GM10248 (cell line): ENCODE measurements at regions of chr4 and their contacts with region 1.

Region 1: GRCh38 chr4:105473324-105474098 is at the start of gene PPA2:
- DNase-seq: peak; percentile 92
- CTCF ChIP-seq: no peak

Region 2: GRCh38 chr4:105453550-105454205 is 19.8 kb before region 1 on chr4:
- CTCF ChIA-PET with region 1: interaction called, 24 read pairs
- POLR2A ChIA-PET with region 1: interaction called, 4 read pairs
- DNase-seq: peak; percentile 49
- CTCF ChIP-seq: no peak

Region 3: DNA sequence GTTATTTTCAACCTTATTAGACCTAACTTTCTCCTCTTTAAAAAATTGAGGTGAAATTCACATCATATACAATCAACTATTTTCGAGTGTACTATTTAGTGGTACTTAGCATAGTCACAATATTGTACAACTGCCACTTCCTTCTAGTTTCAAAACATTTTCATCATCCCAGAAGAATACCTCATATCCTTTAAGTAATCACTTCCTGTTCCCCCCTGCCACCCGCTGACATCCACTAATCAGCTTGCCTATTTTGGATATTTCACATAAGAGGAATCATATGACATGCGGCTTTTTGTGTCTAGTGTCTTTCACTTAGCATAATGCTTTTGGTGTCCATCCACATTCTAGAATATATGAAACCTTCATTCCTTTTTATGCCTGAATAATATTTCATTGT is 10.3 kb after region 1 on chr4:
- CTCF ChIA-PET with region 1: interaction called, 15 read pairs
- POLR2A ChIA-PET with region 1: interaction called, 3 read pairs
- DNase-seq: no peak
- CTCF ChIP-seq: no peak

Region 4: DNA sequence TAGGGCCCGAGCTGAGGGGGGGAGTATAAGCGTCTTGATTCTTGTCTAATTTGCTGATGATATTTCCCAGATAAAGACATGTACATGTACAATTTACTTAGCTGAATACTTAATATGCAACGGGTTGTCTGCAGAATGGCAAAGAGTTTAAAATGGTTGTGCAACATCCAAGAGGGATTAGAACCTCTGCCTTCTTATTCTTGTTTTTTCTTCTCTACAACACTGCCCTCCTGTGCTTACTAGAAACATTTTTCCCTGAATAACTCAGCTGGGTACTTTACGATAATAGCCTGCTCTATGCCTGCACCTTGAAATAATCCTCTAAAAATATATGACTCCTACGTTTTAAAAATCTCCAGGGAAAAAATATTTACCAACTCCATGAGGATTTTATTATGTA is 193.2 kb after region 1 on chr4:
- CTCF ChIA-PET with region 1: interaction called, 24 read pairs
- POLR2A ChIA-PET with region 1: no interaction called
- DNase-seq: peak; percentile 28
- CTCF ChIP-seq: peak; percentile 15

Region 5: GRCh38 chr4:106266201-106266600 is 792.7 kb after region 1 on chr4:
- CTCF ChIA-PET with region 1: no interaction called
- POLR2A ChIA-PET with region 1: no interaction called
- DNase-seq: no peak
- CTCF ChIP-seq: peak; percentile 62